ENCODE measurements at regions of chr11 and their contacts with region 1.

Region 1: GRCh38 chr11:7513234-7514098 is at the start of gene PPFIBP2:
- DNase-seq: peak; percentile 86
- H3K4me3 ChIP-seq: peak within 1 kb of the TSS; percentile 97
- H3K27ac ChIP-seq: peak within 1 kb of the TSS; percentile 97
- H3K4me1 ChIP-seq: peaks cover 57% of the 10 kb centered on the region
- CTCF ChIP-seq: peak; percentile 88
- total RNA-seq, gene PPFIBP2: 102 and 129 TPM in 2 replicates

Region 2: GRCh38 chr11:6389921-6390724 is 1123.3 kb before region 1 on chr11 and contains the start of gene SMPD1:
- CTCF ChIA-PET with region 1: no interaction called
- POLR2A ChIA-PET with region 1: no interaction called
- intact Hi-C with region 1: loop called (anchors 10 kb)
- DNase-seq: peak; percentile 93
- H3K4me3 ChIP-seq: peak within 1 kb of the TSS; percentile 73
- H3K27ac ChIP-seq: peak within 1 kb of the TSS; percentile 22
- H3K4me1 ChIP-seq: peaks cover 24% of the 10 kb centered on the region
- CTCF ChIP-seq: no peak
- total RNA-seq, gene SMPD1: 5.1 and 5.4 TPM in 2 replicates

Region 3: GRCh38 chr11:7501894-7502293 is 11.6 kb before region 1 on chr11:
- CTCF ChIA-PET with region 1: interaction called, 3 read pairs
- POLR2A ChIA-PET with region 1: interaction called, 12 read pairs
- intact Hi-C with region 1: no loop called
- DNase-seq: no peak
- H3K4me3 ChIP-seq: no peak overlapping the region
- H3K27ac ChIP-seq: no peak overlapping the region
- H3K4me1 ChIP-seq: peaks cover 9% of the 10 kb centered on the region
- CTCF ChIP-seq: no peak

Region 4: DNA sequence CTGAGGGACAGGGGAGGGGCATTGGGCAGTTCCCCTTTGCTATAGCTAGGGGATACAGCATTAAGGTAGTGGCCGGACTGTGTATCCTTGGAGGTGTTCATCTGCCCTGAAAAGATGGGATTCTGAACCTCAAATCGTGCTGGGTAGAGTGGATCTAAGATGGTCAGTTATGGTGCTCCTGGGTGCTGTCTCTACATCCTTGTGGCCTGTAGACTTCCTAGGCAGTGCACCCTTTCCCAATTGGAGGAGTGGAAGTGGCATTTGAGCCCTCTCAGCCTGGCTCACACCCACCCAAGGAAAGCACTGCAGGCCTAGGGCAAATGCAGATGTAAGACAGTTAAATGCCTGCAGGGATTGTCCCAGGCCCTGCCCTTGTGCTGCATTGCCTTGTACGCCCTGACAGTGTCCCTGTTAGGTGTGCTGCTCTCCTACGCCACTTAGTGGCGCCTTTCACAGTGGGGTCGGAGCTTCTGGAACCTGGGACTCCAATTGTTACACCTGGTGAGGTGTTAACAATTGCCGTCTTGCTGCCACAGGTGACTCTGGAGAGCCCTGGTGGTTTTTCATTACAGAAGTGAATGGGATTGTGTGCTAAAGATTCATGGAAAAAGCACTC is 35.3 kb after region 1 on chr11:
- CTCF ChIA-PET with region 1: no interaction called
- POLR2A ChIA-PET with region 1: interaction called, 7 read pairs
- intact Hi-C with region 1: loop called (anchors 1 kb)
- DNase-seq: peak; percentile 53
- H3K4me3 ChIP-seq: no peak overlapping the region
- H3K27ac ChIP-seq: no peak overlapping the region
- H3K4me1 ChIP-seq: peaks cover 17% of the 10 kb centered on the region
- CTCF ChIP-seq: peak; percentile 78

Region 5: DNA sequence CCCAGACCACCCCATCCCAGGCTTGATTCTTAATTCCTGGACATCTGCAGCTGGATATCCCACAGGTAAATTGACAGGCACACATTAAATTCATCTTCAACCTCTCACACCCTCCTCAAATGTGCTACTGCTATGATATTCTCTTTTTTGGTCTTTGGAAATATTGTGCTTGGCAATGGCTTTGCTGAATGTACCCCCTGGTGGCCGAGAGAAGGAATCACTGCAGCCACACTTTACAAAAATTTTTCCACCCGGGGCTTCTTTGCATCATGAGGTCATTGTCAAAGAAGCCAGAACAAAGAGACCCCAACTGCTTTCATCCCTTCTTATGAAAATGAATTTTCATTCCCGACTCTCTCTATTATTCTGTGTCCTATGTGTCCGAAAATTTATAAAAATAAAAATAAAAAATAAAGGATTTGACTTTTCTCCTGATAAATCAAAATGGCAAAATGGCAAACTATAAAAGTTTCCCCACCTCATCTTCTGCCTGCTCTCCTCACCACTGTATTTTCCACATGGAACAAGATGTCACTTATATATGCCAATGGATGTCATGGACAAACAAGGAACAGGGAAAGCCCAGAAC is 174.9 kb after region 1 on chr11:
- CTCF ChIA-PET with region 1: no interaction called
- POLR2A ChIA-PET with region 1: no interaction called
- intact Hi-C with region 1: loop called (anchors 1 kb)
- DNase-seq: peak; percentile 60
- H3K4me3 ChIP-seq: no peak overlapping the region
- H3K27ac ChIP-seq: no peak overlapping the region
- H3K4me1 ChIP-seq: no peaks in the 10 kb centered on the region
- CTCF ChIP-seq: peak; percentile 94

Measured in OCI-LY7 (cell line).